CD4-positive, alpha-beta T cell (primary cell): ENCODE measurements at regions of chr17 and their contacts with region 1.

Region 1: DNA sequence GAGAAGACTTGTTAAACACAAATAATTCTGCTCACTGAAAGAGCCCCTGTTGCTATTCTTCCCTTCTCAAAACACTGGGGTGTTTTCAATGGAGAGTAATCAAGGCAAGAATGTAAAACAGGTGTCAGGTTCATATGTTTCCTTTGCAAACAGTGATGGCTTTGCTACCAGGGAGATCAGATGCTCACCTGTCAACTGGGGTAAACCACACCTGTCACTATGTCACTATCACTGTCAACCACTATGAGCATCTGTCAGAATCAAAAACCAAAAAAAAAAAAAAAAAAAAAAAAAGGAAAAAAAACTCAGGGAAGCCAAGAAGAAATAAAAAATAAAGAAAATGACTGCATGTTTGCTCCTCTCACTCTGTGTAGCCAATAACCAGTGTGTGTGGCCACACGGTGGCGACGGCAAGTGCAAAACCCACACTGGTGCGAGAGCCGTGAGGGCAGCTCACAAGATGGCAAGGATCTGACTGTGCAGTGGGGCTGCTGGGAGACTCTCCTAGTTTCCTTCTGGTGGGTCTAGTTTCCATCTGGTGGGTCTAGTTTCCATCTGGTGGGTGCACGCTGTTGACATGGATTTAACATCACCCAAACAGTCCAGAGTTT is 22.7 kb downstream of the USP22 start:
- DNase-seq: peak in 10 of 14 experiments; percentile 27 to 72 (median 40)
- ATAC-seq: peak; percentile 74
- H3K4me3 ChIP-seq: no peak overlapping the region
- H3K4me3 Mint-ChIP-seq: no peak overlapping the region
- H3K27ac ChIP-seq: no peak overlapping the region
- H3K27ac Mint-ChIP-seq: peak overlapping the region; percentile 47
- H3K4me1 ChIP-seq: peaks cover 21% of the 10 kb centered on the region
- H3K4me1 Mint-ChIP-seq: peaks cover 37% of the 10 kb centered on the region
- H3K27me3 ChIP-seq: no peaks in the 10 kb centered on the region
- H3K27me3 Mint-ChIP-seq: no peaks in the 10 kb centered on the region
- CTCF ChIP-seq: no peak

Region 2: GRCh38 chr17:21098934-21099689 is 79.0 kb after region 1 on chr17:
- CTCF ChIA-PET with region 1: interaction called, 4 read pairs
- POLR2A ChIA-PET with region 1: no interaction called
- intact Hi-C with region 1: loop called in 1 of 2 experiments (anchors 1 kb)
- DNase-seq: peak; percentile 32 to 82 (median 48)
- ATAC-seq: peak; percentile 97
- H3K4me3 ChIP-seq: peak overlapping the region; percentile 62
- H3K4me3 Mint-ChIP-seq: peak overlapping the region; percentile 85
- H3K27ac ChIP-seq: no peak overlapping the region
- H3K27ac Mint-ChIP-seq: no peak overlapping the region
- H3K4me1 ChIP-seq: peaks cover 13% of the 10 kb centered on the region
- H3K4me1 Mint-ChIP-seq: peaks cover 12% of the 10 kb centered on the region
- H3K27me3 ChIP-seq: no peaks in the 10 kb centered on the region
- H3K27me3 Mint-ChIP-seq: no peaks in the 10 kb centered on the region
- CTCF ChIP-seq: no peak